ENCODE measurements at regions of chr6 and their contacts with region 1.

Region 1: DNA sequence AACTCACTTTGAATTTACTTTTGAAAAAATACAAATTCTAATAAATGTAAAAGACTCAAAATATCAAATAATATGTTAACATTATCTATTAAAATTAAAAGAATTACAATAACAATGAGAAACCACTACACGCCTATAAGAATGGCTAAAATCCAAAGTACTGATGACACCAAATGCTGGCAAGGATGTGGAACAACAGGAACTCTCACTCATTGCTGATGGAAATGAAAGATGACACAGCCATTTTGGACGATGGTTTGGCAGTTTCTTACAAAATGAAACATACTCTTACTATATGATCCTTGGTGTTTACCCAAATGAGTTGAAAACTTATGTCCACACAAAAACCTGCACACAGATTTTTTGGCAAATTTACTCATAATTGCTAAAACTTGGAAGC is 15.6 kb upstream of the STX11 start:
- DNase-seq: no peak
- ATAC-seq: no peak
- H3K4me3 ChIP-seq: no peak overlapping the region
- H3K4me3 Mint-ChIP-seq: no peak overlapping the region
- H3K27ac ChIP-seq: no peak overlapping the region
- H3K27ac Mint-ChIP-seq: no peak overlapping the region
- H3K4me1 ChIP-seq: peaks cover 0 to 3% of the 10 kb centered on the region in 2 experiments
- H3K4me1 Mint-ChIP-seq: peaks cover 9 to 14% (median 11%) of the 10 kb centered on the region in 3 donors
- H3K27me3 ChIP-seq: peaks cover 0 to 2% of the 10 kb centered on the region in 2 experiments
- H3K27me3 Mint-ChIP-seq: peaks cover 0 to 3% of the 10 kb centered on the region in 2 donors

Region 2: GRCh38 chr6:143505111-143505510 is 629.6 kb before region 1 on chr6:
- CTCF ChIA-PET with region 1: no interaction called
- POLR2A ChIA-PET with region 1: interaction called in 1 of 2 experiments, 12 read pairs
- DNase-seq: no peak
- ATAC-seq: no peak
- H3K4me3 ChIP-seq: no peak overlapping the region
- H3K4me3 Mint-ChIP-seq: no peak overlapping the region
- H3K27ac ChIP-seq: no peak overlapping the region
- H3K27ac Mint-ChIP-seq: no peak overlapping the region
- H3K4me1 ChIP-seq: no peaks in the 10 kb centered on the region
- H3K4me1 Mint-ChIP-seq: peaks cover 0 to 12% (median 4%) of the 10 kb centered on the region in 3 donors
- H3K27me3 ChIP-seq: no peaks in the 10 kb centered on the region
- H3K27me3 Mint-ChIP-seq: no peaks in the 10 kb centered on the region

Measured in T-cell (primary cell).